Right cardiac atrium (tissue), 5 donors: ENCODE measurements at regions of chr18 and their contacts with region 1.

Region 1: DNA sequence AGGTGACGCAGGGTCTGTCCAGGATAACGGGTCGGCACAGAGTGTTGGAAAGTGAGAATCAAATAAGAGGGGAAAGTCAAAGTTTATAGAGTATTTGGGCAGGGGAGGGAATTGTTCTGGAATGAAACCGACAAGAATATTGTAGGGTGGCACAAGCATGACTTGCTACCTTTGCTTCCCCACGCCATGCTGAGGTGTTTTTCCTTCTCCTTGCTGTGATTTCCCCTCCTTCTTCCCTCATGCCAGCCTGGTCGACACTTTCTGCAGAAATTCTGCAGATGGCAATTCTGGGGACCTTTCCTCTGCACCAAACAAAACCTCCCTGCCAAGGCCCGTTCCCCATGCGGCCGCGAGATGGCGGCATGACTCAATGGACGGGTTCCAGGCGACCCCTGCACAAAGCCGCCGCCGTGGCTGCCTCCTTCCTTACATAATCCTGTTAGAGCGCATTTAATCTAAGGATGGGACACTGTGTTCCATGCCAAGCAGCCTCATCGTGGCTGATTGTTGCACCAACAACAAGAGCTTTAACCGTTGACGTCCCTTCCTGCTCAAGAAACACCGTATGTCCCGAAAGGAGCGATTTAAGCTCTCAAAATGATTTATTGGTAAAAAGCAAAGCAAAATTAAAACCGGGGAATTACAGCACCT is at the start of gene MRO:
- DNase-seq: peak; percentile 85 to 96 (median 94)
- ATAC-seq: peak; percentile 96 to 97
- H3K4me3 ChIP-seq: peak within 1 kb of the TSS; percentile 24
- H3K27ac ChIP-seq: peak within 1 kb of the TSS; percentile 6
- H3K4me1 ChIP-seq: no peaks in the 10 kb centered on the region
- H3K27me3 ChIP-seq: no peaks in the 10 kb centered on the region
- total RNA-seq, gene MRO: 5.2 to 8.7 (median 7.9) TPM

Region 2: DNA sequence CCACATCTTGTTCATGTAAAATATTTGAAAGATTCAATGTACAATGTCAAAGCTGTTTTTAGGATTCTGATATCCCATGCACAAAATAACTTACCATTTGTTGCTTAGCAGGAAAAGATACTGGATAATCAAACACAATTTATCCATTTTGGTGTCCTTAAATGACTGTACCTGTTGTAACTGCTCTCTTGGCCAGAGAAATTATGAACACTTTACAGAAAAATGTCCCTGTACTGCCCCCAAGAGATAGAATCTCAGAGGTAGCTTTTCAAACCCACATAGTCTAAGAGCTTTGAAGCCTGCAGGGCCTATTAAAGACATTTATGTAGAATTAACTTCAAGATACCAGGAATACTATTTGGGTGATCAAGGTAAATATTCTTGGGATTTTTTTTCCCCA is 46.9 kb after region 1 on chr18:
- intact Hi-C with region 1: loop called in 2 of 4 experiments (anchors 5 kb)
- DNase-seq: no peak
- ATAC-seq: peak; percentile 62 to 80
- H3K4me3 ChIP-seq: no peak overlapping the region
- H3K27ac ChIP-seq: no peak overlapping the region
- H3K4me1 ChIP-seq: no peaks in the 10 kb centered on the region
- H3K27me3 ChIP-seq: no peaks in the 10 kb centered on the region

Region 3: GRCh38 chr18:50982802-50983179 is 162.9 kb after region 1 on chr18:
- intact Hi-C with region 1: no loop called
- DNase-seq: no peak
- ATAC-seq: no peak
- H3K4me3 ChIP-seq: no peak overlapping the region
- H3K27ac ChIP-seq: no peak overlapping the region
- H3K4me1 ChIP-seq: no peaks in the 10 kb centered on the region
- H3K27me3 ChIP-seq: no peaks in the 10 kb centered on the region

Region 4: GRCh38 chr18:51029694-51030536 is 210.1 kb after region 1 on chr18 and contains the start of gene SMAD4:
- intact Hi-C with region 1: loop called in 1 of 4 experiments (anchors 10 kb)
- DNase-seq: peak; percentile 96 to 99 (median 98)
- ATAC-seq: peak; percentile 97 to 98
- H3K4me3 ChIP-seq: peak within 1 kb of the TSS; percentile 84
- H3K27ac ChIP-seq: peak within 1 kb of the TSS; percentile 99
- H3K4me1 ChIP-seq: peaks cover 6% of the 10 kb centered on the region
- H3K27me3 ChIP-seq: no peaks in the 10 kb centered on the region
- total RNA-seq, gene SMAD4: 85.8 to 98.2 (median 92.7) TPM

Region 5: GRCh38 chr18:51051105-51051712 is 231.4 kb after region 1 on chr18:
- intact Hi-C with region 1: loop called in 2 of 4 experiments (anchors 5 kb)
- DNase-seq: no peak
- ATAC-seq: peak; percentile 77 to 79
- H3K4me3 ChIP-seq: no peak overlapping the region
- H3K27ac ChIP-seq: no peak overlapping the region
- H3K4me1 ChIP-seq: no peaks in the 10 kb centered on the region
- H3K27me3 ChIP-seq: no peaks in the 10 kb centered on the region